Vagina (tissue), 2 donors: ENCODE measurements at regions of chr20 and their contacts with region 1.

Region 1: GRCh38 chr20:49541733-49542513 is 26.0 kb downstream of the PTGIS start:
- DNase-seq: no peak
- H3K4me3 ChIP-seq: no peak overlapping the region
- H3K27ac ChIP-seq: peak overlapping the region; percentile 5
- H3K4me1 ChIP-seq: no peaks in the 10 kb centered on the region
- H3K27me3 ChIP-seq: no peaks in the 10 kb centered on the region
- CTCF ChIP-seq: peak in 2 of 3 experiments; percentile 72 to 95
- POLR2A ChIP-seq: no peak

Region 2: GRCh38 chr20:49179368-49180277 is 362.3 kb before region 1 on chr20:
- intact Hi-C with region 1: no loop called
- DNase-seq: no peak
- H3K4me3 ChIP-seq: no peak overlapping the region
- H3K27ac ChIP-seq: no peak overlapping the region
- H3K4me1 ChIP-seq: peaks cover 55% of the 10 kb centered on the region
- H3K27me3 ChIP-seq: no peaks in the 10 kb centered on the region
- CTCF ChIP-seq: no peak
- POLR2A ChIP-seq: no peak

Region 3: GRCh38 chr20:49846206-49846807 is 304.4 kb after region 1 on chr20:
- intact Hi-C with region 1: loop called (anchors 10 kb)
- DNase-seq: no peak
- H3K4me3 ChIP-seq: no peak overlapping the region
- H3K27ac ChIP-seq: no peak overlapping the region
- H3K4me1 ChIP-seq: peaks cover 11% of the 10 kb centered on the region
- H3K27me3 ChIP-seq: no peaks in the 10 kb centered on the region
- CTCF ChIP-seq: peak in 2 of 3 experiments; percentile 64 to 68
- POLR2A ChIP-seq: no peak